A673 (cell line): ENCODE measurements at regions of chr17 and their contacts with region 1.

Region 1: GRCh38 chr17:996554-997344 is at the start of gene TIMM22:
- DNase-seq: peak; percentile 99
- H3K4me3 ChIP-seq: peak within 1 kb of the TSS; percentile 82
- H3K27ac ChIP-seq: peak within 1 kb of the TSS; percentile 99
- H3K4me1 ChIP-seq: peaks cover 6% of the 10 kb centered on the region
- H3K27me3 ChIP-seq: no peaks in the 10 kb centered on the region
- CTCF ChIP-seq: peak; percentile 95
- total RNA-seq, gene TIMM22: 20.0 and 21.8 TPM in 2 replicates

Region 2: DNA sequence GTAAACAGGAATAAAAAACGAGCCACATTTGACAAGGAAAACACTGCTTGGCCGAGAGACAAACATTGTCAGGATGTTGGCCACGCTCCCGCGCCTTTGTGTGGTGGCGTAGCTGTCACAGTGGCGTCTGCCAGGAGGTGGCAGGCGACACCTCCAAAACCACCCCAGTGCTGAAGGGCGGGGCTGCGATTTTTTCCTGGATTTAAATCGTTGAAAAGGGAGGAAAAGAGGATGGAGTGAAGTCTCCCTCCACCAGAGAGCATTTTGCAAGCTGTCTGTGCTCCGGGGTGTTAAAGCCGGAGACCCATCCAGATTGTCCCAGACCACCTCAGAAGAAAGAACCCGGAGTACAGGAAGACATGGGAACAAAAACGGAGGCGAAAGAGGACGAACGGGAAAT is 201.9 kb before region 1 on chr17:
- CTCF ChIA-PET with region 1: interaction called, 8 read pairs
- POLR2A ChIA-PET with region 1: no interaction called
- intact Hi-C with region 1: loop called (anchors 5 kb)
- DNase-seq: peak; percentile 88
- H3K4me3 ChIP-seq: no peak overlapping the region
- H3K27ac ChIP-seq: no peak overlapping the region
- H3K4me1 ChIP-seq: peaks cover 4% of the 10 kb centered on the region
- H3K27me3 ChIP-seq: no peaks in the 10 kb centered on the region
- CTCF ChIP-seq: peak; percentile 96

Region 3: GRCh38 chr17:903981-904481 is 92.7 kb before region 1 on chr17:
- CTCF ChIA-PET with region 1: no interaction called
- POLR2A ChIA-PET with region 1: no interaction called
- intact Hi-C with region 1: no loop called
- DNase-seq: no peak
- H3K4me3 ChIP-seq: no peak overlapping the region
- H3K27ac ChIP-seq: no peak overlapping the region
- H3K4me1 ChIP-seq: no peaks in the 10 kb centered on the region
- H3K27me3 ChIP-seq: no peaks in the 10 kb centered on the region
- CTCF ChIP-seq: no peak

Region 4: GRCh38 chr17:1109606-1110540 is 113.1 kb after region 1 on chr17:
- CTCF ChIA-PET with region 1: interaction called, 10 read pairs
- POLR2A ChIA-PET with region 1: no interaction called
- intact Hi-C with region 1: no loop called
- DNase-seq: peak; percentile 46
- H3K4me3 ChIP-seq: peak overlapping the region; percentile 77
- H3K27ac ChIP-seq: peak overlapping the region; percentile 88
- H3K4me1 ChIP-seq: peaks cover 25% of the 10 kb centered on the region
- H3K27me3 ChIP-seq: no peaks in the 10 kb centered on the region
- CTCF ChIP-seq: no peak